AG04449 (cell line): ENCODE measurements at regions of chr17 and their contacts with region 1.

Region 1: DNA sequence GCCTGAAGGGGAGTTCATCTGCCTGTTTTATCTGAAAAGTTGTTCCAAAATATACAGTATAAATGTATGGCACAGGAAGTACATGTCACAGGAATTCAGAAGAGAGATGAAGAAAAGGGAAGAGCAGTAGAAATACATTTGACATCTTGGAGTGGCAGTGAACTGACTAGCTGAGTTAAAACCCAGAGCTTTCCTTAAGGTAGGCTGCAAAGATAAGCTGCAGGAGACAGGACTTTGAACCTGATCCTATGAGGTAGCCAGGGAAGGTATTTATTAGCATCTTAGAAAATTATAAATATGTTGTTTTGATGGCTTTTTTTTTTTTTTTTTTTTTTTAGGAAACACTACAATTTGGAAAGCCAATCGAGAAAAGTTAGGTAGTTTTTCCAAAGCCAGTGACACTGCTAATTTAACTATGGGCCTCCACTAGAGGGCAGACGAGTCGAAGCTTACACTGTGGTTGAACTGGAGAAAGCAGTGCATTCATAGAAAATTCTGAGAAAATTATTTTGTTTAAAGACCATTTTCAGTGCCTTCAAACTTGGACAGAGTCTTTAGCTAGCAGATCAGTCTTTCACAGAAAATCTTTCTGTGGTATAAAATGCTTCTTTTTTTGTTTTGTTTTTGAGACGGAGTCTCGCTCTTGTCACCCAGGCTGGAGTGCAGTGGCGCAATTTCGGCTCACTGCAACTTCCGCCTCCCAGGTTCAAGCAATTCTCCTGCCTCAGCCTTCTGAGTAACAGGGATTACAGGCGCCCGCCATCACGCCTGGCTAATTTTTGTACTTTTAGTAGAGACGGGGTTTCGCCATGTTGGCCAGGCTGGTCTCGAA is 122.3 kb downstream of the SSH2 start:
- DNase-seq: no peak
- H3K4me3 ChIP-seq: no peak overlapping the region
- CTCF ChIP-seq: peak; percentile 67

Region 2: DNA sequence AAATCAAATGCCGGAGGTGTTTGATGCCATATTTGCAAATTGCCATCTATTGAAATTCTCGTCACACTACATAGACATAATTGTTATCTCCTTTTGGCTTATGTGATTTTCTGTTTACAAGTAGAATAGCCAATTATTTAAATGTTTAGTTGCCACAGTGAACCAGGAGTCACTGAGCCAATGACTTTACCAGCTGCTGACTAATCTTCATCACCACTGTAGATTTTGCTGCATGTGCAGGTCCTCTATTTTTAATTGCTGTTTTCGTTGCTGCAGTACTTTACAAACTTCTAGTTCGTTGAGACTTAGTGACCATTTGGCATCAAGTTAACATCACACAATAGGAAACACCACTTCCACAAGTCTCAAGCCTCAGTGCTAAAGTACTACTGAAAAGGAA is 263.7 kb before region 1 on chr17:
- CTCF ChIA-PET with region 1: no interaction called
- POLR2A ChIA-PET with region 1: no interaction called
- DNase-seq: no peak
- H3K4me3 ChIP-seq: no peak overlapping the region
- CTCF ChIP-seq: no peak

Region 3: DNA sequence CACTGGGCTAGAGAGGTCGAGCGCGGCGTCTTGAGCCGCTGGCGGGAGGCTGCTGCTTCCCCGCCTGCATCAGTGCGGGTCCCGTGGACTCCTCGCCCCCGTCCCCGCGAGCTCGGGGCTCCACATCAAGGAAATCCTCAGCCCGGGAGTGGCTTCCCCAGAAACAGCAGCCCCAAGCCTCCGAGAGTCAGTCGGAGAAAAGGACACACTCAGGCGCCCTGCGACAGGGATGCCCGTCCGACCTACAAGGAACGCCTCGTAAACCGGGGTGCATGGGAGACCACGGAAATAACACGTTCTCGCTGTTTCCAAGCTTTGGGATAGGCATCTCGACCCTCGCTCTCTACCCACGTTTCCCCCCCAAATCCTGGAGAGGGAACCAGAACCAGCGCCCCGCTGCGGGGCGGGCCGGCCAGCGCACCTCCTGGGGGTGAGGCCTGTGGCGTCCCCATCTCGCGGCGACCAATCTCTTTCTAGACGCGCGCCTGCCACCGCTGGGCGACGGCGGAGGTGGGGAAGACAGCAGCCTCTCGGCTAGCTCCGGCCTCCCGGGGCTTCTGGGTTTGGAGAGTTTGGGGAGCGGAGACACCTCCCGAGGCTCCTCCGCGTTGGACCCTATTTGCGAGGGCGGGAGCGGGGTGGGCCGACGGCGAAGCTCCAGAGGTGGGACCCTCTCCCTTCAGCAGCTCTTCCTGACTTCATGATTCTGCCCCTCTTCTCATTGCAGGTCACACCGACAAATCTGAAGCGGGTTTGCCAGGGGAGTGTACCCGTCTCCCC is 240.0 kb before region 1 on chr17:
- CTCF ChIA-PET with region 1: no interaction called
- POLR2A ChIA-PET with region 1: no interaction called
- DNase-seq: no peak
- H3K4me3 ChIP-seq: peak overlapping the region; percentile 77
- CTCF ChIP-seq: peak; percentile 45

Region 4: GRCh38 chr17:29789196-29790170 is 18.3 kb before region 1 on chr17:
- CTCF ChIA-PET with region 1: interaction called, 10 read pairs
- POLR2A ChIA-PET with region 1: no interaction called
- DNase-seq: no peak
- H3K4me3 ChIP-seq: no peak overlapping the region
- CTCF ChIP-seq: no peak

Region 5: DNA sequence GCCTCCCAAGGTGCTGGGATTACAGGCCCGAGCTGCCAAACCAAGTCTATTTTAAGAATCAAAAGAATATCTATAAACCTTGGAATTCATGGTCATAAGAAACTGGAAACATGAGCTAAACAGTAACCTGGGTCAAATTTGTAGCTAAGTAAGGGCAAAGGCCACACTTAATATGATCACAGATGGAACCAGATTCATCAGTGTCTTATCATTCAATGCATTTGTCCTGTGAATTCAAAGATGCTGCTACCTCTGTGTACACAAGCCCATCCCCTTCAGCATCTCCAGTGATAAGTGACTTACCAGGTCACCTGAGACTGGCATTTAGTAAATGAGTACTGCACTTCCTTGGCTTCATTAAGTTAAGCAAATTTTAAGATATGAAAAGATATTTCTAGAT is 14.2 kb after region 1 on chr17:
- CTCF ChIA-PET with region 1: interaction called, 10 read pairs
- POLR2A ChIA-PET with region 1: no interaction called
- DNase-seq: no peak
- H3K4me3 ChIP-seq: no peak overlapping the region
- CTCF ChIP-seq: no peak

Region 6: DNA sequence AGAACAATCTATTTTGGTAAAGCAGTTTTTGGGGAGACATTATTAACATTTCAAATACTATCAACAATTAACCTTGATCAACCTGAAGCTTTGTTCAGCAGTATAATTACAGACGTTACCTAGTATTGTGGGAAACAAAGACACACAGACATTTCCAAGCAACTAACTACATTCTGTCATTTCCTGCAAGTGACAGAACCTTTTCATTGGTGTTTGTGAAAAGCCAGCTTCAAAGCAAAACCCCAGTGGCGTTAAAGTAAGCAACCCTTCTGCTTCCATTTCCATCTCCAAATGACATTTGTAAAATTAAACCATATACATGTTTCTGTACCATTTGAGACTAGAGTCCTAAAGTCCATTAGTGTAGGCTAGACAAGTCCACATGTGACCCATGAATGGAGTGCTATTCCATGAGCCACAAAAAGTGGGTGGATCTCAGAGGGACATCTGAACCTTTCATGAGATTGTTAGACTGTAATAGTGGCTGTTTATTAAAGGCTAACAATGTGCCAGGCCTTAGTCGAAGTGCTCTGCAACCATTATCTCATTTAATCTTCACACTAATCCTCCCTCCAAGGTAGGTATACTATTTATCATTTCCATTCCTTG is 21.0 kb after region 1 on chr17:
- CTCF ChIA-PET with region 1: interaction called, 24 read pairs
- POLR2A ChIA-PET with region 1: no interaction called
- DNase-seq: no peak
- H3K4me3 ChIP-seq: no peak overlapping the region
- CTCF ChIP-seq: no peak

Region 7: DNA sequence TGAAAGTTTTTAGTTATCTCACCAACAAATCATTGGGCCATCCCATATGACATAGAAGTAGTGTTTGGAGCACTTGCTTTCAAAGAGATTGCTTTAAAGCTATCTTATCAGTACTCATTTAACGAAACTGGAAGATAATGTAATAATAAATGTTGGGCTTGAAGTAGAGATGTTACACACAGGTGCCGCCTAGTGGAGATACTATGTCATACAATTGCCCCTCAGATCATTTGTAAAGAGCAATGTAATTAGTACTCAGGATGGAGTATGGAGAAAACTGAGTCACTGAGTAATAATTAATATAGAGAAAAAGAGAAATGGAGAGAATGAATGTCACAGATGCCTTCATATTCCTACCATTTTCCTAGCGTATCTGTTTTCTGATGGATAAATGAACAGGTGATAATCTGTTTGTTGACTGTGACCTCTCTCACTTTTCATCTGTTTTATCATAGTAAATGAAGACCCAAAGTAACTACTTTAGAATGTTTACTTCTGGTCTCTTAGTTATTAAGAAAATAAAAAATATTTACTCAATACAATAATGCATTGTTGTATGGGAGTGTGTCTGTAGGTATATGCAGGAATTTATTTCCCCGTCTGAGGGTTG is 214.1 kb after region 1 on chr17:
- CTCF ChIA-PET with region 1: interaction called, 18 read pairs
- POLR2A ChIA-PET with region 1: no interaction called
- DNase-seq: no peak
- H3K4me3 ChIP-seq: no peak overlapping the region
- CTCF ChIP-seq: peak; percentile 69